ENCODE measurements at regions of chr7 and their contacts with region 1.

Region 1: GRCh38 chr7:79377097-79377496 is 76.4 kb downstream of the MAGI2 start:
- DNase-seq: no peak
- ATAC-seq: no peak
- H3K4me3 Mint-ChIP-seq: no peak overlapping the region
- H3K27ac Mint-ChIP-seq: no peak overlapping the region
- H3K4me1 Mint-ChIP-seq: no peaks in the 10 kb centered on the region
- H3K27me3 Mint-ChIP-seq: no peaks in the 10 kb centered on the region
- CTCF ChIP-seq: no peak

Region 2: GRCh38 chr7:79357101-79357500 is 20.0 kb before region 1 on chr7:
- CTCF ChIA-PET with region 1: no interaction called
- POLR2A ChIA-PET with region 1: interaction called, 3 read pairs
- intact Hi-C with region 1: loop called (anchors 2 kb)
- DNase-seq: no peak
- ATAC-seq: no peak
- H3K4me3 Mint-ChIP-seq: no peak overlapping the region
- H3K27ac Mint-ChIP-seq: no peak overlapping the region
- H3K4me1 Mint-ChIP-seq: no peaks in the 10 kb centered on the region
- H3K27me3 Mint-ChIP-seq: peaks cover 2% of the 10 kb centered on the region
- CTCF ChIP-seq: no peak

Measured in activated CD8-positive, alpha-beta T cell treated with anti-CD3 and anti-CD28 coated beads for 36 hours (primary cell).